ENCODE measurements at regions of chr17 and their contacts with region 1.

Region 1: DNA sequence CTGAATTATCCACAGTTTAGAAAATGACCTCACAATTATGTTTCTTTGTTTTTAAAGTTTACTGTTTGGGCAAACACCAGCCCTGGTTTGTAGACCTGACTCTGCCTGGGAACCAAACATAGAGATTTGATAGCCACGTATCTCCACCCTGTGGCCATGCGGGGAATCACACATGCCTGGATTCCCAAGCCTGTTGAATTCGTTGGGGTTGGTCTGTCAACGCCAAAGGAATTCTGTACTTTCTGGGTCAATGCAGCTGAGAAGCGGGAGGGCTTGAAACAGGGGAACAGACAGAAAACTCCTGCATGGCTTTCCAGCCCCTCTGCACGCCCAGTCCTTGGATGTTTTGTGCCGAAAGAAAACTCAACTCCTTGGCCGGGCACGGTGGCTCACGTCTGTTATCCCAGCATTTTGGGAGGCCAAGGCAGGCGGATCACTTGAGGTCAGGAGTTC is 27.0 kb downstream of the CD300A start:
- DNase-seq: peak; percentile 39 to 73 (median 63)
- ATAC-seq: peak; percentile 90
- H3K4me3 ChIP-seq: no peak overlapping the region
- H3K4me3 Mint-ChIP-seq: no peak overlapping the region
- H3K27ac ChIP-seq: no peak overlapping the region
- H3K27ac Mint-ChIP-seq: no peak overlapping the region
- H3K4me1 ChIP-seq: peaks cover 0 to 10% of the 10 kb centered on the region in 2 donors
- H3K4me1 Mint-ChIP-seq: peaks cover 0 to 15% (median 4%) of the 10 kb centered on the region in 7 donors
- H3K27me3 ChIP-seq: no peaks in the 10 kb centered on the region
- H3K27me3 Mint-ChIP-seq: peaks cover 0 to 11% (median 0%) of the 10 kb centered on the region in 5 donors

Region 2: DNA sequence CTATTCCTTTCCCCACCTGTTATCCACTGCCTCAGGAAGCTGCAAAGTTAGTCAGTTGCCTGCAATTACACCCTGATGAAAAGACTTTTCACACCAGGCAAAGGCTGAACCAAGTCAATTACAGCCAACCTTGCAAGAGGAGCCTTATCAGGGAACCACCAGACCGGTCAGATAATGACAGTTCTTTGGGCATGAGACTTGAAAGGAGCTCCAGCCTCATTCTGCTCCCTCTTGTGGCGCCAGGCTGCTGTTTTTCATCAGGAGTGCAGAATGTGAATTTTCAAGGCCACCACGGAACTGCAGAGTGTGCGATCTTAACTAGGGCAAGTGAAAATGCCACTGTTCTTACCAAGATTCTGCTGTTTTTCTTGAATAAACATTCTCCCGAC is 196.9 kb before region 1 on chr17:
- CTCF ChIA-PET with region 1: no interaction called
- POLR2A ChIA-PET with region 1: no interaction called
- intact Hi-C with region 1: loop called (anchors 1 to 10 kb)
- DNase-seq: no peak
- ATAC-seq: peak; percentile 61
- H3K4me3 ChIP-seq: no peak overlapping the region
- H3K4me3 Mint-ChIP-seq: no peak overlapping the region
- H3K27ac ChIP-seq: no peak overlapping the region
- H3K27ac Mint-ChIP-seq: peak overlapping the region in 2 of 9 donors; percentile 29 to 51
- H3K4me1 ChIP-seq: peaks cover 0 to 8% of the 10 kb centered on the region in 2 donors
- H3K4me1 Mint-ChIP-seq: peaks cover 0 to 25% (median 4%) of the 10 kb centered on the region in 7 donors
- H3K27me3 ChIP-seq: no peaks in the 10 kb centered on the region
- H3K27me3 Mint-ChIP-seq: peaks cover 0 to 9% (median 0%) of the 10 kb centered on the region in 5 donors

Region 3: DNA sequence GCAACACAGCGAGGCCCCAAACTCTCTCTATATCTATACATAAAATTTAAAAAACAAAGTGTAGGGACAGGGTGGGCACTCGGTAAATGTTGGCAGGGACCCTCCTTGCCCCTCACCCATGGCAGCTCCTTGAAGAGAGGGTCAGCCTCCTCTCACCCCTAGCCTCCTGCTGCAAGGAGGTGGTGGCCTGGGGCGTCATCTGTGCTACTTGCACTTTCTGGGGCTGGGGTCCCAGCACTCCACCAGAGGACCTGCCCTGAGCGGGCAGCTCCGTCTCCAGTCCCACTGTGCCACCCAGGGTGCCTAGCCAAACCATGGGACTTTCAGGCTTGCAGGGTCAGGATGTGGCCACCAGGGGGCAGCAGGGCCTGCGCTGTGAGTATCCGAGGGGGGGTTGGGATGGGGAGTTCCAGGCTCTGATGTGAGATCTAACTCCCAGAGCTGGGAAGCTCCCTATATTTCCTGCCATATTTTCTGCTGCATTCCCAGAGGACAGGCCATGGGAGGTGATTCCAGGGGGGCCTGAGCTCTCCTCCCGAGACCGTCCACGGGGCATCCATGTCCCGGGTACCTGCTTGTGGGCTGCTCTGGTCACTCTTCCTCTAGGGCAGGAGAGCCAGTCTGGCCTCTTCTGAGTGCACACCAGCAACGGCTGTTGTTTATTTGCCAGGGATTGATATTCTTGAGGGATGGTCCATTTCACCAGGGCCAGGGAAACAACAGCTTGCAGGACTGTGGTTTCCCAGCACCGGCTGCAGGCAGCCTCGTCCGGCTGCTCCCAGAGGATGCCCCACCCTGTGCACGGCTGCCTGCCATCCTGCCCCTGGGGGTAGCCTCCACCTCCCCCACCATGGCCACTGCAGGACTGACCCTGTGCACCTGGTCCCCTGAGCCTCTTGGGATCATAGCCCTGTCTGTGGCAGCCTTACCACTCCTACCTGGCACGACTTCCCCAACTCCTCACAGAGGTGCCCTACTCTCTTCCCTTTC is 125.0 kb before region 1 on chr17:
- CTCF ChIA-PET with region 1: interaction called, 11 read pairs
- POLR2A ChIA-PET with region 1: no interaction called
- intact Hi-C with region 1: loop called (anchors 1 kb)
- DNase-seq: peak; percentile 39 to 78 (median 59)
- ATAC-seq: peak; percentile 87
- H3K4me3 ChIP-seq: peak overlapping the region; percentile 43
- H3K4me3 Mint-ChIP-seq: peak overlapping the region in 9 of 10 donors; percentile 53 to 76 (median 68)
- H3K27ac ChIP-seq: no peak overlapping the region
- H3K27ac Mint-ChIP-seq: peak overlapping the region in 1 of 9 donors; percentile 36
- H3K4me1 ChIP-seq: peaks cover 12 to 13% of the 10 kb centered on the region in 2 donors
- H3K4me1 Mint-ChIP-seq: peaks cover 8 to 15% (median 12%) of the 10 kb centered on the region in 7 donors
- H3K27me3 ChIP-seq: no peaks in the 10 kb centered on the region
- H3K27me3 Mint-ChIP-seq: peaks cover 0 to 9% (median 0%) of the 10 kb centered on the region in 5 donors

Region 4: GRCh38 chr17:74430706-74431567 is 62.5 kb before region 1 on chr17:
- CTCF ChIA-PET with region 1: no interaction called
- POLR2A ChIA-PET with region 1: no interaction called
- intact Hi-C with region 1: loop called in 1 of 2 experiments (anchors 10 kb)
- DNase-seq: peak in 1 of 9 donors; percentile 37
- ATAC-seq: peak; percentile 41
- H3K4me3 ChIP-seq: no peak overlapping the region
- H3K4me3 Mint-ChIP-seq: peak overlapping the region in 8 of 10 donors; percentile 7 to 77 (median 61)
- H3K27ac ChIP-seq: no peak overlapping the region
- H3K27ac Mint-ChIP-seq: peak overlapping the region in 1 of 9 donors; percentile 29
- H3K4me1 ChIP-seq: peaks cover 0 to 6% of the 10 kb centered on the region in 2 donors
- H3K4me1 Mint-ChIP-seq: peaks cover 0 to 18% (median 5%) of the 10 kb centered on the region in 7 donors
- H3K27me3 ChIP-seq: peaks cover 5 to 13% of the 10 kb centered on the region in 2 donors
- H3K27me3 Mint-ChIP-seq: peaks cover 27 to 79% (median 48%) of the 10 kb centered on the region in 5 donors

Region 5: GRCh38 chr17:74446551-74447500 is 46.6 kb before region 1 on chr17:
- CTCF ChIA-PET with region 1: no interaction called
- POLR2A ChIA-PET with region 1: no interaction called
- intact Hi-C with region 1: no loop called
- DNase-seq: no peak
- ATAC-seq: peak; percentile 62
- H3K4me3 ChIP-seq: no peak overlapping the region
- H3K4me3 Mint-ChIP-seq: peak overlapping the region in 1 of 10 donors; percentile 26
- H3K27ac ChIP-seq: no peak overlapping the region
- H3K27ac Mint-ChIP-seq: no peak overlapping the region
- H3K4me1 ChIP-seq: no peaks in the 10 kb centered on the region
- H3K4me1 Mint-ChIP-seq: peaks cover 0 to 3% (median 0%) of the 10 kb centered on the region in 7 donors
- H3K27me3 ChIP-seq: no peaks in the 10 kb centered on the region
- H3K27me3 Mint-ChIP-seq: peaks cover 6 to 30% (median 7%) of the 10 kb centered on the region in 5 donors

Region 6: GRCh38 chr17:74528491-74529199 is 35.2 kb after region 1 on chr17:
- CTCF ChIA-PET with region 1: no interaction called
- POLR2A ChIA-PET with region 1: no interaction called
- intact Hi-C with region 1: loop called in 1 of 2 experiments (anchors 1 kb)
- DNase-seq: peak in 1 of 9 donors; percentile 12
- ATAC-seq: peak; percentile 64
- H3K4me3 ChIP-seq: no peak overlapping the region
- H3K4me3 Mint-ChIP-seq: no peak overlapping the region
- H3K27ac ChIP-seq: no peak overlapping the region
- H3K27ac Mint-ChIP-seq: no peak overlapping the region
- H3K4me1 ChIP-seq: no peaks in the 10 kb centered on the region
- H3K4me1 Mint-ChIP-seq: peaks cover 3 to 18% (median 6%) of the 10 kb centered on the region in 7 donors
- H3K27me3 ChIP-seq: no peaks in the 10 kb centered on the region
- H3K27me3 Mint-ChIP-seq: peaks cover 23 to 50% (median 32%) of the 10 kb centered on the region in 5 donors

Region 7: DNA sequence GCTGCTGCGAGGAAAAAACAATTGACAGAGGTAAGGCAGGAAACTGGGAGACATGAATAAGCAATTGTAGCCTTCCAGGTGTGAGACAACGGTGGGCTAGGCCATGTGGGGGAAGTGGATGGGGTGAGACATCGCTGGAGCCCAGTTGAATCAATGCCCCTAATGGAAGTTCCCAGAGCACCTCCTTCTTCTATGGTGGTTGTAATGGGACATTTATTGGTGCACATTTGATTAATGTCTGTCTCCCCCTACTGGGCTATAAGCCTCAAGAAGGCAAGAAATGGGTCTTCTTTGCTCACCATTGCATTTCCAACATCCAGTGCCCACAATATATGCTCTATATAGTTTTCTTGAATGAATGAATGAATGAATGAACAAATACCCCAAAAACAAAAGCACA is 152.8 kb after region 1 on chr17:
- CTCF ChIA-PET with region 1: no interaction called
- POLR2A ChIA-PET with region 1: no interaction called
- intact Hi-C with region 1: no loop called
- DNase-seq: peak in 2 of 9 donors; percentile 7 to 9
- ATAC-seq: peak; percentile 69
- H3K4me3 ChIP-seq: no peak overlapping the region
- H3K4me3 Mint-ChIP-seq: no peak overlapping the region
- H3K27ac ChIP-seq: no peak overlapping the region
- H3K27ac Mint-ChIP-seq: no peak overlapping the region
- H3K4me1 ChIP-seq: no peaks in the 10 kb centered on the region
- H3K4me1 Mint-ChIP-seq: peaks cover 0 to 11% (median under 1%) of the 10 kb centered on the region in 7 donors
- H3K27me3 ChIP-seq: no peaks in the 10 kb centered on the region
- H3K27me3 Mint-ChIP-seq: peaks cover 20 to 71% (median 37%) of the 10 kb centered on the region in 5 donors

Measured in naive thymus-derived CD4-positive, alpha-beta T cell (primary cell).